Endothelial cell of umbilical vein (primary cell): ENCODE measurements at regions of chr4 and their contacts with region 1.

Region 1: GRCh38 chr4:21765810-21766407 is 182.7 kb downstream of the KCNIP4 start:
- DNase-seq: peak; percentile 75
- H3K4me3 ChIP-seq: no peak overlapping the region
- H3K27ac ChIP-seq: no peak overlapping the region
- H3K4me1 ChIP-seq: peaks cover 12% of the 10 kb centered on the region
- H3K27me3 ChIP-seq: peaks cover 33 to 50% of the 10 kb centered on the region in 2 experiments
- CTCF ChIP-seq: peak; percentile 74 to 78
- POLR2A ChIP-seq: no peak

Region 2: GRCh38 chr4:20700007-20700761 is 1065.7 kb before region 1 on chr4 and contains the start of gene PACRGL:
- CTCF ChIA-PET with region 1: interaction called, 3 read pairs
- POLR2A ChIA-PET with region 1: no interaction called
- dilution Hi-C with region 1: no loop called
- intact Hi-C with region 1: loop called (anchors 2 kb)
- DNase-seq: peak; percentile 94
- H3K4me3 ChIP-seq: peak within 1 kb of the TSS; percentile 88 to 92 (median 91)
- H3K27ac ChIP-seq: peak within 1 kb of the TSS; percentile 82
- H3K4me1 ChIP-seq: peaks cover 18% of the 10 kb centered on the region
- H3K27me3 ChIP-seq: peaks cover 0 to 3% of the 10 kb centered on the region in 2 experiments
- CTCF ChIP-seq: no peak
- POLR2A ChIP-seq: peak; percentile 43
- total RNA-seq, gene PACRGL: 19.2 and 20.2 TPM in 2 replicates

Region 3: DNA sequence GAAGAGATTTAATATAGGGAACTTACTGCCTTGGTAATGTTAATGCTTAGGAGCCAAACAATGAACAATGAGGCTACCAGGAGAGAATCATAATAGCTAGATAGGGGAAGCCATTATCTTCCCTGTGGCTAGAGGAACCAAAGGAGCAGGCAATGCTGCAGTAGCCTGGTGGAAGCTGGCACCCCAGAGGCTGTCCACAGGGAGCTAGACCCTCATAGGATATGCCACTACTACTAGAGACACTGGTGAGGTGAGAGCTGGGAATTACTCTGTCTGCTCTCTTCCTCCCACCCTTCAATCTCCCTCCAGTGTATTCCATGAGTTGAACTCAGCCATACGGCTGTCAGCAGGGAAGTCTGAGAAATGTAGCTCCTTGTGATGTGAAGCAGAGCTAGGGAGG is 418.8 kb before region 1 on chr4:
- CTCF ChIA-PET with region 1: no interaction called
- POLR2A ChIA-PET with region 1: no interaction called
- dilution Hi-C with region 1: no loop called
- intact Hi-C with region 1: no loop called
- DNase-seq: no peak
- H3K4me3 ChIP-seq: no peak overlapping the region
- H3K27ac ChIP-seq: no peak overlapping the region
- H3K4me1 ChIP-seq: no peaks in the 10 kb centered on the region
- H3K27me3 ChIP-seq: no peaks in the 10 kb centered on the region
- CTCF ChIP-seq: no peak
- POLR2A ChIP-seq: no peak

Region 4: DNA sequence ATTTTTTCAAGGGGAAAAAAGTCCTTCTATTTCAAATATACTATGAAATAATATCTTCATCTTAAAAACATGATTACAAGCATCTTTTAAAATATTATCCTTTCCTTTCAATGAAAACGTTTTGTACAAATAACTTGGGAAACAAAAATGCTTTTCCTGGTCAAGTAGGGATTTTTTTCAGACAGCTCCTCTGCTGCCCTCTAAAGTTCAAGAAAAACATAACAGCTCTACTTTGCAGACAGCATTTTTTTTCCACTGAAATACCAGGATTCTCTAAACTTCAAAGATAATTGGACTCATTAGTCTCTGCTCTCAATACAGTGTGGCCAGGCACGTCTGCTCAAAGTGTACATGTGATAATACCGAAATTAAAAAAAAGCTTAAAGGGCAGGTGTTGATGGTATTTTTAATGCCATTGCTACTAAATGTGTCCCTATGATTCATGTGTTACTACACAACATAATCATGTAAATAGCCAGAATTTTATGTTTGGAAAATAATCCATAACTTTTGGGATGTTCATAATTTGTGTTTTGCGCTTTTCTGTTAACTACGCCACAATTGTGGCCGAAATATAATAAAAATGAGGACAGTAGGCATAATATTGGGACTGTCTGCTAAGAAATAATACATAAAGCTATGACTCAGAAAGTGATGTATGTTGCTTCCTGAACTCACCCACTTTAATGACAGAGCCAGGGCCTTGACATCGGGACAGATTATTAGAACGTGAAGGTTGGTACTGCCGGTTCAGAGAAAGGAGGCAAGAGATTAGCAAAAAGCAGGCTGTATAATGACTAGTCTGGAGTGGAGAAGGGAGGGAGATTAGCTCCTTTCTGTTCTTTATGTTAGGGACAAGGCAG is 296.2 kb before region 1 on chr4:
- CTCF ChIA-PET with region 1: interaction called, 20 read pairs
- POLR2A ChIA-PET with region 1: no interaction called
- dilution Hi-C with region 1: no loop called
- intact Hi-C with region 1: no loop called
- DNase-seq: peak; percentile 40
- H3K4me3 ChIP-seq: no peak overlapping the region
- H3K27ac ChIP-seq: no peak overlapping the region
- H3K4me1 ChIP-seq: peaks cover 5% of the 10 kb centered on the region
- H3K27me3 ChIP-seq: peaks cover 6 to 9% of the 10 kb centered on the region in 2 experiments
- CTCF ChIP-seq: peak; percentile 25 to 54
- POLR2A ChIP-seq: no peak

Region 5: DNA sequence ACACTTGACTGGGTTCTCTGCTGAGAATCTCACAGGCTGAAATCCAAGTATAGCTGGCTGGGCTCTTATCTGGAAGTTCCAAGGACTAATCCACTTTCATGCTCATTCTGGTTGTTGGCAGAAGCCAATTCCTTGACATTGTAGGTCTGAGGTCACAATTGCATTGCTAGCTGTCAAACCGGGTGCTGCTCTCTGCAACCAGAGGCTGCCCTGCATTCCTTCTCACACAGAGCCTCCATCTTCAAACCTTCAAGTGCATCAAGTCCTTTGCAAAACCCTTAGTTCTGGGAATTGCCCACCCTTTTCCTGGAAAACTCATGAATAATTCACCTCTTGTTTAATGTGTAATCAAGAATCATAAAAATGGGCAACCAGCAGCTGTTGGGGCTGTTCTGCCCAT is 221.5 kb before region 1 on chr4:
- CTCF ChIA-PET with region 1: interaction called, 3 read pairs
- POLR2A ChIA-PET with region 1: no interaction called
- dilution Hi-C with region 1: loop called (anchors 25 kb)
- intact Hi-C with region 1: no loop called
- DNase-seq: no peak
- H3K4me3 ChIP-seq: no peak overlapping the region
- H3K27ac ChIP-seq: no peak overlapping the region
- H3K4me1 ChIP-seq: no peaks in the 10 kb centered on the region
- H3K27me3 ChIP-seq: no peaks in the 10 kb centered on the region
- CTCF ChIP-seq: no peak
- POLR2A ChIP-seq: no peak

Region 6: GRCh38 chr4:21802406-21802805 is 36.5 kb after region 1 on chr4:
- CTCF ChIA-PET with region 1: interaction called, 4 read pairs
- POLR2A ChIA-PET with region 1: no interaction called
- dilution Hi-C with region 1: no loop called
- intact Hi-C with region 1: loop called (anchors 1 kb)
- DNase-seq: peak; percentile 89
- H3K4me3 ChIP-seq: peak overlapping the region in 1 of 3 experiments; percentile 32
- H3K27ac ChIP-seq: peak overlapping the region; percentile 92
- H3K4me1 ChIP-seq: peaks cover 17% of the 10 kb centered on the region
- H3K27me3 ChIP-seq: no peaks in the 10 kb centered on the region
- CTCF ChIP-seq: no peak
- POLR2A ChIP-seq: no peak